PC-9 (cell line): ENCODE measurements at regions of chr12 and their contacts with region 1.

Region 1: DNA sequence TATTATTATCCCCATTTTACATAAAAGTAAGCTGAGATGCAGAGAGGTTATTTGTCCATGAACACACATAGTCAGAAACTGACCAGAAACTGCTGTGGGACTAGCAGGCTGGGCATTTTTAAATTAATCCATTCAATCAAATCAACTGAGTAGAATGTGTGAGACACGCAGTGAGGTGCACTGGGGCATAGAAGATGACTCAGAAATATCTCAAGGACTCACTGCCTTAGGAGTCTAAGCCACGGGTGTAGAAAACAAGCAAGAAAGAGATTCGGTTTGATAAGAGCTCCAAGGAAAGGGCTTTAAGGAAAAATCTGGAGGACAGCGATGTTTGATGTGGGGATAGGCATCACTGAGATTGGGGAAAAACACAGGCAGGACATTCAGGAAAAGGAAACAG is 127.8 kb downstream of the ANO2 start:
- DNase-seq: no peak
- H3K4me3 ChIP-seq: no peak overlapping the region
- H3K27ac ChIP-seq: no peak overlapping the region
- H3K4me1 ChIP-seq: no peaks in the 10 kb centered on the region
- H3K27me3 ChIP-seq: peaks cover 39% of the 10 kb centered on the region
- CTCF ChIP-seq: no peak

Region 2: DNA sequence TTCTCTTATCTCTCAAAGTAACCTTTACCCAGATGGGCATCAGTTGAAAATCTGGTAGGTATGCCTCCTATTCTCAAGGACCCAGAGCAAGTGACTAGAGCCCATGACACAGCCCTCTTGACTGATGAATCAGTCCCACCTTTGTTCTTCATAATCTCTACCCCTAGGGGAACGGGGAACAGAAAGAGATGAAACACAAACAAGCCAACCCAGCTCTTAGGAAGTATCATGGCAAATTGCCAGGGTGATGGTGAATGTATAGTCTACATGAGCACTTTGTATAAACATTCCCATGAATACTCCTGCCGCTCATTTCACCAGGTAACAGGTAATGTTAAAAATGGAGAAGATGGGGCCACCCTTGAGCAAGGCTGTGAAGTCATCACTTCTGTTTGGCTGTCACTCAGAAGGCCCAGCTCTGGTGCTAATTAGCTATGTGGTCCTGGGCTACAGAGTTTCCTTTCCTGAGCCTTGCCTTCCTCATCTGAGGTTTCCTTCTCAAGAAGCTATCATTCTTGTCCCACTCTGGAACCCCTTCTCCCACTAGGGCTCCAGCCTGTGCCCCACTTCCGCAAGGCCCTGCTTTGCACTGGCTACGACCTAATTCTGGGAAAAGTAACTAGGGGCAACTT is 33.8 kb before region 1 on chr12:
- CTCF ChIA-PET with region 1: no interaction called
- POLR2A ChIA-PET with region 1: interaction called, 10 read pairs
- intact Hi-C with region 1: no loop called
- DNase-seq: no peak
- H3K4me3 ChIP-seq: no peak overlapping the region
- H3K27ac ChIP-seq: no peak overlapping the region
- H3K4me1 ChIP-seq: no peaks in the 10 kb centered on the region
- H3K27me3 ChIP-seq: peaks cover 17% of the 10 kb centered on the region
- CTCF ChIP-seq: no peak

Region 3: GRCh38 chr12:5861416-5861815 is 44.2 kb after region 1 on chr12:
- CTCF ChIA-PET with region 1: no interaction called
- POLR2A ChIA-PET with region 1: no interaction called
- intact Hi-C with region 1: no loop called
- DNase-seq: no peak
- H3K4me3 ChIP-seq: no peak overlapping the region
- H3K27ac ChIP-seq: no peak overlapping the region
- H3K4me1 ChIP-seq: no peaks in the 10 kb centered on the region
- H3K27me3 ChIP-seq: peaks cover 61% of the 10 kb centered on the region
- CTCF ChIP-seq: no peak